CD14-positive monocyte (primary cell): ENCODE measurements at regions of chr21 and their contacts with region 1.

Region 1: GRCh38 chr21:44510508-44511210 is 29.3 kb downstream of the KRTAP10-1 start:
- DNase-seq: peak; percentile 18 to 36 (median 21)
- H3K4me3 ChIP-seq: no peak overlapping the region
- H3K4me3 Mint-ChIP-seq: no peak overlapping the region
- H3K27ac ChIP-seq: no peak overlapping the region
- H3K27ac Mint-ChIP-seq: no peak overlapping the region
- H3K4me1 ChIP-seq: peaks cover 0 to 10% of the 10 kb centered on the region in 2 donors
- H3K4me1 Mint-ChIP-seq: peaks cover 3% of the 10 kb centered on the region
- H3K27me3 ChIP-seq: peaks cover 0 to 3% of the 10 kb centered on the region in 2 donors
- H3K27me3 Mint-ChIP-seq: peaks cover 4 to 15% (median 8%) of the 10 kb centered on the region in 3 donors
- CTCF ChIP-seq: peak; percentile 84

Region 2: GRCh38 chr21:44444286-44444931 is 66.2 kb before region 1 on chr21:
- intact Hi-C with region 1: no loop called
- DNase-seq: no peak
- H3K4me3 ChIP-seq: no peak overlapping the region
- H3K4me3 Mint-ChIP-seq: no peak overlapping the region
- H3K27ac ChIP-seq: no peak overlapping the region
- H3K27ac Mint-ChIP-seq: peak overlapping the region in 1 of 7 donors; percentile 33
- H3K4me1 ChIP-seq: no peaks in the 10 kb centered on the region
- H3K4me1 Mint-ChIP-seq: peaks cover 2% of the 10 kb centered on the region
- H3K27me3 ChIP-seq: peaks cover 0 to 3% of the 10 kb centered on the region in 2 donors
- H3K27me3 Mint-ChIP-seq: peaks cover 13 to 25% (median 19%) of the 10 kb centered on the region in 3 donors
- CTCF ChIP-seq: no peak

Region 3: DNA sequence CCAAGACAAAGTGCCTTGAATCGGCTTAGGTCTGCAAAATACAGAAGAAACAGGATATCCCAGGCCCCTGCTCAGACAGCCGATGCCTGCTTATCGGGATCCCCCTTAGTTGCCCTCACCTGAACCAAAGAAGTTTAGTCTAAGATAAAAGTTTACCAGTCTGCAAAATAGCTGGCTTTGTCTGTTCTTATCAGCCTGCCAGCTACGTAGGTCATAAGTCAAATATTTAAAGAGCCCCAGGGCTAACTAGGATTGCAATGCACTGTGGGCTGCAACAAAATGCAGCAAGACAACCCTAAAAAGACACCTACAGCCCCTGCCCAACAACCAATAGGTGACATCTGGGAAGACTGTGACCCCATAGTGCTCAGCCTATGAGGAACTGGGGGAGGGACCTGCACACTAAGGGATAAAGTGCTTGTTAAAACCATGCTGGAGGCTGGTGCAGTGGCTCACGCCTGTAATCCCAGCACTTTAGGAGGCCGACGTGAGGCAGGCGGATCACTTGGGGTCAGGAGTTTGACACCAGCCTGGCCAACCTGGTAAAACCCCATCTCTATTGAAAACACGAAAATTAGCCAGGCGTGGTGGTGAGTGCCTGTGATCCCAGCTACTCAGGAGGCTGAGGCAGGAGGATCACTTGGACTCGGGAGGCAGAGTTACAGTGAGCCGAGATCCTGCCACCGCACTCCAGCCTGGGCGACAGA is 27.9 kb before region 1 on chr21:
- intact Hi-C with region 1: no loop called
- DNase-seq: no peak
- H3K4me3 ChIP-seq: no peak overlapping the region
- H3K4me3 Mint-ChIP-seq: no peak overlapping the region
- H3K27ac ChIP-seq: no peak overlapping the region
- H3K27ac Mint-ChIP-seq: no peak overlapping the region
- H3K4me1 ChIP-seq: no peaks in the 10 kb centered on the region
- H3K4me1 Mint-ChIP-seq: no peaks in the 10 kb centered on the region
- H3K27me3 ChIP-seq: peaks cover 0 to 3% of the 10 kb centered on the region in 2 donors
- H3K27me3 Mint-ChIP-seq: peaks cover 5 to 11% (median 6%) of the 10 kb centered on the region in 3 donors
- CTCF ChIP-seq: no peak

Region 4: GRCh38 chr21:44792702-44793591 is 282.3 kb after region 1 on chr21:
- intact Hi-C with region 1: loop called (anchors 5 kb)
- DNase-seq: peak; percentile 28 to 37 (median 36)
- H3K4me3 ChIP-seq: no peak overlapping the region
- H3K4me3 Mint-ChIP-seq: no peak overlapping the region
- H3K27ac ChIP-seq: no peak overlapping the region
- H3K27ac Mint-ChIP-seq: peak overlapping the region in 2 of 7 donors; percentile 33 to 63
- H3K4me1 ChIP-seq: no peaks in the 10 kb centered on the region
- H3K4me1 Mint-ChIP-seq: peaks cover 13% of the 10 kb centered on the region
- H3K27me3 ChIP-seq: no peaks in the 10 kb centered on the region
- H3K27me3 Mint-ChIP-seq: no peaks in the 10 kb centered on the region
- CTCF ChIP-seq: peak; percentile 77